Panc1 (cell line): ENCODE measurements at regions of chr7 and their contacts with region 1.

Region 1: DNA sequence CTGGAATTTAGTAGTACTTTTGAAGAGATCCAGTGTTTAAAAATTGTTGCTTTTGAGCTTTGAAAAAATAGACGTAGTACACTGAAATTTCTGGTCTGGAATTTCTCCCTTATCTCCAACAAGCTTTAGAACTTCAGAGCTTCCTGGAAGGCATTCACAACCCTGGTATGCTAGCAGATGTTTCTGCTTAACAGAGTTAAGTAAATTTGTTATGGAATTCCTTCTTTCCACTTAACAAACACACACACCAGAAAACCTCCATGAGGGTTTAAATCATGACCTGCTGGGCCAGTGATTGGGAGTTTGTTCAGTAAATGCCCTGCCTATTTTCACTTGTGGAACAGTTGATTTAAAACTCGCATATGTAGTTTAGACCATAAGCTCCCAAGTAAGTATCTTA is 13.7 kb downstream of the ASB15 start:
- DNase-seq: no peak
- ATAC-seq: no peak
- H3K4me3 ChIP-seq: no peak overlapping the region
- H3K27ac ChIP-seq: no peak overlapping the region
- H3K4me1 ChIP-seq: no peaks in the 10 kb centered on the region
- H3K27me3 ChIP-seq: no peaks in the 10 kb centered on the region; the same call in 1 of the 2 replicates
- CTCF ChIP-seq: no peak

Region 2: GRCh38 chr7:123557398-123558288 is 57.7 kb before region 1 on chr7 and contains the start of gene NDUFA5:
- CTCF ChIA-PET with region 1: interaction called, 16 read pairs
- POLR2A ChIA-PET with region 1: no interaction called
- in situ Hi-C with region 1: no loop called
- intact Hi-C with region 1: no loop called
- DNase-seq: peak; percentile 99
- ATAC-seq: peak; percentile 100
- H3K4me3 ChIP-seq: peak within 1 kb of the TSS; percentile 92 to 99
- H3K27ac ChIP-seq: peak within 1 kb of the TSS; percentile 96
- H3K4me1 ChIP-seq: peaks cover 9% of the 10 kb centered on the region
- H3K27me3 ChIP-seq: no peaks in the 10 kb centered on the region; the same call in 1 of the 2 replicates
- CTCF ChIP-seq: no peak
- total RNA-seq, gene NDUFA5: 53.4 TPM

Region 3: GRCh38 chr7:123649964-123650363 is 34.6 kb after region 1 on chr7:
- CTCF ChIA-PET with region 1: no interaction called
- POLR2A ChIA-PET with region 1: no interaction called
- in situ Hi-C with region 1: no loop called
- intact Hi-C with region 1: no loop called
- DNase-seq: no peak
- ATAC-seq: no peak
- H3K4me3 ChIP-seq: no peak overlapping the region
- H3K27ac ChIP-seq: no peak overlapping the region
- H3K4me1 ChIP-seq: no peaks in the 10 kb centered on the region
- H3K27me3 ChIP-seq: peaks cover 3% of the 10 kb centered on the region; the same call in 1 of the 2 replicates
- CTCF ChIP-seq: no peak